PC-3 (cell line): ENCODE measurements at regions of chr11 and their contacts with region 1.

Region 1: DNA sequence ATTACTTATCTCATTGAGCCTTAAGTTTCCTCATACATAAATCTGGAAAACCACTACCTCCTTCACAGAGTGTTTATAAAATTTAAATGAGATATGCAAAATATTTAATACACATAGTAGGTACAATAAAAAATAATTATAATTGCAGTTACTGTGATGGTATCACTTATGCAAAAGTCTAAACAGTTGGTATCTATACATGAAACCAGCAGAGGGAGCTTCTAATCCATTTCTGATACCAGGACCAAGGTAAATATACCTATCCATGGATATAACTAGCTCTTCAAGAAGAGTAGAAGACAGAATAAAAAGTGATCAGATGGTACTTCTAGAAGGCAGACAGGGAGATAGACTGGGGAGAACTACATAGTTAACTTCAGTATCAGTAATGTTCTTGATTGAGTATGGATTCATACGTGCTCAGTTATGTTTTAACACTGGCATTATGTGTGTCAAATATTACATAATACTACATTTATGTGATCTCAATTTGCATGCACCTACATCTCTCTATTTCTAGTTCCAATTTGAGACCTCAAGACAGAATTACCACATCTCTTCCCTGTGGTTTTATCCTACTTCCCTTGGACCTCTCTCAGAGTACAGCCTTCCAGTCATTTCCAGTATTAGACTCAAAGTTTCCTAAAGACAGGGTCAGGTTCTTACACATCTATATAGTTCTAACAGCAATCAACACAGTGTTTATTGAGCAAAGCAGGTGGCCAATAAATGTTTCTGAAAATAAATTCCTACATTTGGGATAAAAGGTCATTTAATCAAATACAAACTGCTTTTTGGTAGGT is 13.7 kb upstream of the TSG101 start:
- DNase-seq: peak; percentile 57
- ATAC-seq: peak; percentile 88
- H3K4me3 ChIP-seq: no peak overlapping the region
- H3K27ac ChIP-seq: no peak overlapping the region
- H3K4me1 ChIP-seq: no peaks in the 10 kb centered on the region
- H3K27me3 ChIP-seq: no peaks in the 10 kb centered on the region
- CTCF ChIP-seq: peak; percentile 80

Region 2: GRCh38 chr11:18588297-18589252 is 48.2 kb after region 1 on chr11 and contains the start of gene UEVLD:
- CTCF ChIA-PET with region 1: no interaction called
- POLR2A ChIA-PET with region 1: no interaction called
- intact Hi-C with region 1: no loop called
- DNase-seq: peak; percentile 85
- ATAC-seq: peak; percentile 89
- H3K4me3 ChIP-seq: peak within 1 kb of the TSS; percentile 80
- H3K27ac ChIP-seq: peak within 1 kb of the TSS; percentile 41
- H3K4me1 ChIP-seq: peaks cover 19% of the 10 kb centered on the region
- H3K27me3 ChIP-seq: no peaks in the 10 kb centered on the region
- CTCF ChIP-seq: no peak
- total RNA-seq, gene UEVLD: 15.6 and 22.2 TPM in 2 replicates

Region 3: GRCh38 chr11:18615628-18616392 is 75.4 kb after region 1 on chr11:
- CTCF ChIA-PET with region 1: no interaction called
- POLR2A ChIA-PET with region 1: no interaction called
- intact Hi-C with region 1: loop called (anchors 5 kb)
- DNase-seq: no peak
- ATAC-seq: no peak
- H3K4me3 ChIP-seq: no peak overlapping the region
- H3K27ac ChIP-seq: no peak overlapping the region
- H3K4me1 ChIP-seq: peaks cover 4% of the 10 kb centered on the region; the same call in 1 of the 2 replicates
- H3K27me3 ChIP-seq: no peaks in the 10 kb centered on the region
- CTCF ChIP-seq: no peak

Region 4: GRCh38 chr11:18731949-18732821 is 191.8 kb after region 1 on chr11:
- CTCF ChIA-PET with region 1: no interaction called
- POLR2A ChIA-PET with region 1: no interaction called
- intact Hi-C with region 1: loop called (anchors 1 kb)
- DNase-seq: peak; percentile 70
- ATAC-seq: peak; percentile 81
- H3K4me3 ChIP-seq: no peak overlapping the region
- H3K27ac ChIP-seq: no peak overlapping the region
- H3K4me1 ChIP-seq: no peaks in the 10 kb centered on the region; the same call in 1 of the 2 replicates
- H3K27me3 ChIP-seq: no peaks in the 10 kb centered on the region
- CTCF ChIP-seq: peak; percentile 96

Region 5: GRCh38 chr11:18853086-18853720 is 312.8 kb after region 1 on chr11:
- CTCF ChIA-PET with region 1: no interaction called
- POLR2A ChIA-PET with region 1: no interaction called
- intact Hi-C with region 1: loop called (anchors 1 kb)
- DNase-seq: peak; percentile 63
- ATAC-seq: peak; percentile 93
- H3K4me3 ChIP-seq: no peak overlapping the region
- H3K27ac ChIP-seq: no peak overlapping the region
- H3K4me1 ChIP-seq: no peaks in the 10 kb centered on the region; the same call in 1 of the 2 replicates
- H3K27me3 ChIP-seq: peaks cover 25% of the 10 kb centered on the region
- CTCF ChIP-seq: peak; percentile 78